Common myeloid progenitor, CD34-positive (primary cell): ENCODE measurements at regions of chr17 and their contacts with region 1.

Region 1: DNA sequence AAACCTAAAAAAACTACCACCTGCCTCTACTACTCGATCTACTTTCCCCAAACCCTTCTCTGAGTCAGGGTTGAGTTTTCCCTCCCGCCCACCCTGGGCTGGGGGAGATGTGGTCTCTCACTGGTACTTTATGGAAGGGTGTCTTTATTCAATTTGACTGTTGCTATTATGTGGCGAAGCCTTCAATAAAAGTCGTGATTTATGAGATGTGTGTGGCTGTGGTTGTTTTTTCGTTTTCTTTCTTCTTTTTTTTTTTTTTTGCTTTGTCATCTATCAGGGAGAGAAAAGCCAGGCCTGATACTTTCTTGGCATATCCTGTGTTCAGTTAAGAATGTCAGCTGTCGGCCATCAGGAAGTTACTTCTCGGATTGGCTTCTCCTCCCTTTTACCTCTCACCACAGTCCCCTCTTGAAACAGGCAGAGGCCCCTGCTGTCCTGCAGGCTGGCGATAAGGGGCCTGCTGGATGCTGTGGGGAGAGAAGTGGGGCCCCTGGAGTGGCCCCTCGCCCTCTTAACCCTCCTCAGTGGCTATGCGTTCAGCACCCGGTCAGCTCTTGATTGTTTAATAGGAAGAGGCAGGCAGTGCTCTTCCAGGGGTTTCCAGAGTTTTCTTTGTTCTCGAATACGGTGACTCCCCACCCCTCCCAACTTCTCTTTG is 123.0 kb downstream of the MSI2 start:
- DNase-seq: peak; percentile 87 to 98 (median 96)
- H3K4me3 ChIP-seq: peak overlapping the region in 3 of 7 experiments; percentile 33 to 55 (median 38)
- H3K27ac ChIP-seq: peak overlapping the region; percentile 64 to 86
- H3K4me1 ChIP-seq: peaks cover 16 to 92% (median 82%) of the 10 kb centered on the region in 4 experiments
- H3K27me3 ChIP-seq: no peaks in the 10 kb centered on the region

Region 2: GRCh38 chr17:57357399-57357807 is 22.0 kb before region 1 on chr17:
- CTCF ChIA-PET with region 1: interaction called, 3 read pairs
- POLR2A ChIA-PET with region 1: interaction called, 11 read pairs
- DNase-seq: peak in 2 of 3 donors; percentile 47 to 58
- H3K4me3 ChIP-seq: peak overlapping the region in 5 of 7 experiments; percentile 17 to 72 (median 53)
- H3K27ac ChIP-seq: peak overlapping the region; percentile 67 to 76
- H3K4me1 ChIP-seq: peaks cover 27 to 86% (median 73%) of the 10 kb centered on the region in 4 experiments
- H3K27me3 ChIP-seq: no peaks in the 10 kb centered on the region

Region 3: DNA sequence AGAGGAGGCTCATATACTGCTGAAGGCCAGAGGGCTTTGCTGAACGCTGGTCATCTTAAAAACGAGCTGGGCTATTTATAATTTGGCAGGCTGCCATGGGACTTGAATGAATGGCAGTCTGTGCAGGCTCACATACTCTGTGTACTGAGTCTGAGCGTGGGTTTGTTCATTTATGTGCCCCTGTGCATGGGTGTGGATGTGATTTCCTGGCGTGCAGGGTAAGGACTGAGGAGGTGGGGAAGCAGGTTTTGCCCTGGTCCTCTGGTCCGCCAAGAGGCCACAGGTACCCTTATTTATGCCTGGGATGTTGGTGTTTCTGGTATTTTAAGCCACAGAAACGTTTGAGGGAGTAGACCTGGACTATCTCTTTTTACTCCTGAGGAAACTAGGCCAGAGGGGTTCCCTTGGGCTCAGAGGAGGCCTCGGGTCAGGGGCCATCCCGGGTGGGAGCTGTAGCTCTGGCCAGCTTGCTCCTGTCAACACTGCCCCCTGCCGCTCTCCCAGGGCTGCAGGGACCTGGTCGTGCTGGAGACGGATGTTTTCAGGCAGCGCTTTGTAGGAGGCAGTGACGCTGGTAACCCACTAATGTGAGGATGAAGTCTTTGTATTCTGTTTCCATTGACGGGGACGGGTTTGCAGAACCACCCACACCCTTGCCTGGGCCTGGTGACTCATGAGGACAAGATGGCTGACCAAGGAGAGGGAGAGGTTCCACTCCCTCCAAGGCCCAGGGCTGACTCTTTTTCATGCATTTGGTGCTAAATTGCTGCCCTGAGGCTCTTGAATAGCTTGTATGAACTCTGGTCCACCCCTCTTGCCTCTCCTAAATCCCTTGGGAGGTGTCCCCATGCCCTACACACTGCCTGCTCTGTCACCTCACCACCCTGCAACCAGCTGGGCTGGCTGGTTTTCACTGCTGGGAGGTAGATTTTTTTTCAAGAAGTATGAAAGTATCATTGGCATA is 61.4 kb after region 1 on chr17:
- CTCF ChIA-PET with region 1: interaction called, 10 read pairs
- POLR2A ChIA-PET with region 1: interaction called, 3 read pairs
- DNase-seq: peak; percentile 87 to 98 (median 96)
- H3K4me3 ChIP-seq: peak overlapping the region in 3 of 7 experiments; percentile 4 to 9 (median 6)
- H3K27ac ChIP-seq: peak overlapping the region; percentile 89 to 93
- H3K4me1 ChIP-seq: peaks cover 31 to 99% (median 98%) of the 10 kb centered on the region in 4 experiments
- H3K27me3 ChIP-seq: no peaks in the 10 kb centered on the region